Activated CD4-positive, alpha-beta T cell treated with anti-CD3 and anti-CD28 coated beads for 36 hours (primary cell): ENCODE measurements at regions of chr19 and their contacts with region 1.

Region 1: DNA sequence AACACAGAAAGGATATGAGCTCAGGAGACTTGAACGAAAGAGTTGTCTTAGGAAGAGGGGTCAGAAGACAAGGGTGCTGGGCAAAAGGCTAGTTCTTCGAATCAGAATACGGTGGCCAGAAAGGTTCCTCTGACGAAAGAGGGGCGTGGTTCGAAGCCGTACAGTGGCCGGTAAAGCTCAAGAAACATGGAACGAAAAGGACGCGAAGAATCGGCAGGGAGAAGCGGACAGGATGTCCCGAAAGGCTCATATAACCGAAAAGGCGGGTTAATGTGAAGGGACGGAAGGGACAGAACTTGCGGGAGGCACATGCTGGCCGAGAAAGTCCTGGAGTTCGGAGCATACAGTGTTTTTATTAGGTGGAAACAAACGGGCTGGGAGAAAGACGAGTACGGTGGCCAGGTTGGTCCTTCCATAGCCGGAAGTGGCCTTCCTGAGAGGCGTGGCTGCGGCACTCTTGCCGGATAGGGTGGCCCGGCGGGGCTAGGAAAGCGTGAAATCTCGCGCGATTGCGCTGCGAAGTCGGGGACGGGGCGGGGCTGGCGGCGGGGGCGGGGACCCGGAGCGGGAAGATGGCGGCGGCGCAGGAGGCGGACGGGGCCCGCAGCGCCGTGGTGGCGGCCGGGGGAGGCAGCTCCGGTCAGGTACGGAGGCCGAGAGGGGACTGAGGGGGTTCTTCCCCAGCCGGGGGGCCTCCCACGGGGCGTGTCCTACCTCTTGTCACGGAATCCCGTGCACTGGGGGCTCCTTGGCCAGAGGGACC is at the start of gene CLPTM1:
- DNase-seq: peak; percentile 99
- ATAC-seq: peak; percentile 94
- H3K4me3 Mint-ChIP-seq: peak within 1 kb of the TSS; percentile 95
- H3K27ac Mint-ChIP-seq: peak within 1 kb of the TSS; percentile 100
- H3K4me1 Mint-ChIP-seq: peaks cover 39% of the 10 kb centered on the region
- H3K27me3 Mint-ChIP-seq: no peaks in the 10 kb centered on the region
- total RNA-seq, gene CLPTM1: 41.6 to 44.1 TPM

Region 2: DNA sequence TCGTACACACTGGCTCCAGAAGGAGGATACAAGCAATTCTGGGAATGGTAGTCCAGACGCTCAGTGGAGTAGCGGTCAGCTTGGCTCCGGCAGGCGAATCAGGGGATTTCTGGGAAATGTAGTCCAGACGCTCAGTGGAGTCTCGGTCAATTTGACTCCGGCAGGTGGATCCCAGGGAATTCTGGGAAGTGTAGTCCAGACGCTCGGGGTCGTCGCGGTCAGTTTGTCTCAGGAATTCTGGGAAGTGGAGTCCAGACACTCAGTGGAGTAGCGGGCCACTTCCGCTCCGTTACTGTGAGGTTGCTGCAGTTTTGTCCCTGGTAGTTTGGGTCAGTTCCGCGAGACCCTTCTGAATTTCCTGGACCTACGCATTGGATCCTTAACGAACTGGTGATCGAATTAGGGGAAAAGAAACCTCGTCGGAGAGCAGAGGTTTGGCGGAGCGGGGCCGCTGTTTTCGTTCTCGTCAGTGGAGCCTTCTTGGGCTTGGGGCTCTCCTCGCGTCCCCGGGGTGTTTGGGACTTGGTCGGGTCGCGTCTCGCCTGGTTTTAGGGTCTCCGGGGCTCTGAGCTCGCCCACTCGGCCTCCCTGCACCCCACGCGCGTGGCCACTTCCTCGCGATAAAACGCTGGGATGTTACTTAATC is 841.7 kb before region 1 on chr19 and contains the start of gene ZNF225:
- CTCF ChIA-PET with region 1: no interaction called
- POLR2A ChIA-PET with region 1: no interaction called
- intact Hi-C with region 1: no loop called
- DNase-seq: peak; percentile 88
- ATAC-seq: peak; percentile 94
- H3K4me3 Mint-ChIP-seq: peak within 1 kb of the TSS; percentile 99
- H3K27ac Mint-ChIP-seq: peak within 1 kb of the TSS; percentile 93
- H3K4me1 Mint-ChIP-seq: peaks cover 19% of the 10 kb centered on the region
- H3K27me3 Mint-ChIP-seq: no peaks in the 10 kb centered on the region
- total RNA-seq, gene ZNF225: 2.6 to 3.1 TPM

Region 3: DNA sequence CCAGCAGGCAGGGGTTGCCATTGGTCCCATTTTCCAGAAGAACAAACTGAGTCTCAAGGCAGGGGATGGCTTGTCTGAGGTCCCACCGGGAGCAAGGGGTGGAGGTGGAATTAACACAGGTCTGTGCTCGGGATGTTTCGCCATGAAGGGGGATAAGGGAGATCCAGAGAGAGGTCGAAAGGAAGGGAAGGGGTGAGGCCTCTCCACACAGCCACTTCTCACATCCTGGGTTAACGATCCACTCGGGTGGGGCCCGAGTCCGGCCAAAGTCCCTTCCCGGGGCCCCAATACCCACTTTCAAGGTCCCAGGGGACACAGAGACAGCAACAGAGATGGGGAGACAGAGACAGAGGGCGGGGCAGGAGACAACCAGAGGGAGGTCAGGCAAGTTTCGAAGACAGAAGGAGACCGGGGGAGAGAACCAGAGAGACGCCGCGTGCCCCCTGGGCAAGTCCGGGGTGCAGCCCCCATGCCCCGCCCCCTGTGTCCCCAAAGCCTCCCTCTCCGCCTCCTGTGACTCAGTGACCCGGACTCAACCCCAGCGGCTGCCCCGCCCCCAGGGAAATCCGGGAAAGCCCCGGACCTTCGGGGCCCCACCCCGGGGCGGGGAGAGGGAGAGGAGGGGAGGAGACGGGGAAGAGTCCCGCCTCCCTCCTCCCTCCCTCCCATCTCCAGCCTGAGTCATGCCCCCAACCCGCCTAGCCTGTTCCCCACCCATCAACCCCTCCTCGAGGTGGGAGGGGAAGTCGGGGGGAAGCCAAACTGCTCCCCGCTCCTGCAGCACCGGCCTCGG is 207.9 kb before region 1 on chr19:
- CTCF ChIA-PET with region 1: no interaction called
- POLR2A ChIA-PET with region 1: interaction called, 5 read pairs
- intact Hi-C with region 1: loop called in 1 of 2 experiments (anchors 1 kb)
- DNase-seq: peak; percentile 98
- ATAC-seq: peak; percentile 85
- H3K4me3 Mint-ChIP-seq: peak overlapping the region; percentile 91
- H3K27ac Mint-ChIP-seq: peak overlapping the region; percentile 95
- H3K4me1 Mint-ChIP-seq: peaks cover 43% of the 10 kb centered on the region
- H3K27me3 Mint-ChIP-seq: no peaks in the 10 kb centered on the region

Region 4: GRCh38 chr19:44845612-44846454 is 109.2 kb before region 1 on chr19 and contains the start of gene NECTIN2:
- CTCF ChIA-PET with region 1: no interaction called
- POLR2A ChIA-PET with region 1: no interaction called
- intact Hi-C with region 1: loop called (anchors 1 to 2 kb)
- DNase-seq: peak; percentile 98
- ATAC-seq: peak; percentile 77
- H3K4me3 Mint-ChIP-seq: peak within 1 kb of the TSS; percentile 73
- H3K27ac Mint-ChIP-seq: peak within 1 kb of the TSS; percentile 10
- H3K4me1 Mint-ChIP-seq: peaks cover 21% of the 10 kb centered on the region
- H3K27me3 Mint-ChIP-seq: peaks cover 21% of the 10 kb centered on the region
- total RNA-seq, gene NECTIN2: 0.80 to 0.93 TPM

Region 5: DNA sequence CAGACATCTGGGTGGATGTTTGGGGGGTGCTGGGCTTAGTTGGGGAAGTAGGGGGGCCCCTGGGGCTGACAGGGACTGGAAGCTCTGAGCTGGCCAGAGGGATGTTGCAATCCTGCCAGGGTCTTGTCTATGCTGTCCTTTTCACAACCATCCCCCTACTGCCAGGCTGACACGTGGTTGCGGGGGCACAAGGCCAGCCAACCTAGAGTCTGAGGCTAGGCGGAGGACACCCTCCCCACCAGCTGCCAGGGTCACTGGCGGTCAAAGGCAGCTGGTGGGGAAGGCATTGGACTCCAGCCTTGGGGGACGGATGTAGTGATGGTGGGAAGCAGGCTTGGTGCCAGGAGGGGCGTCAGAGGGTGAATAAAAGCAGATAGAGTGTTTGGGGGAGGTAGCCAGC is 42.2 kb before region 1 on chr19:
- CTCF ChIA-PET with region 1: interaction called, 4 read pairs
- POLR2A ChIA-PET with region 1: interaction called, 3 read pairs
- intact Hi-C with region 1: loop called in 1 of 2 experiments (anchors 1 kb)
- DNase-seq: no peak
- ATAC-seq: no peak
- H3K4me3 Mint-ChIP-seq: no peak overlapping the region
- H3K27ac Mint-ChIP-seq: no peak overlapping the region
- H3K4me1 Mint-ChIP-seq: peaks cover 8% of the 10 kb centered on the region
- H3K27me3 Mint-ChIP-seq: peaks cover 27% of the 10 kb centered on the region

Region 6: DNA sequence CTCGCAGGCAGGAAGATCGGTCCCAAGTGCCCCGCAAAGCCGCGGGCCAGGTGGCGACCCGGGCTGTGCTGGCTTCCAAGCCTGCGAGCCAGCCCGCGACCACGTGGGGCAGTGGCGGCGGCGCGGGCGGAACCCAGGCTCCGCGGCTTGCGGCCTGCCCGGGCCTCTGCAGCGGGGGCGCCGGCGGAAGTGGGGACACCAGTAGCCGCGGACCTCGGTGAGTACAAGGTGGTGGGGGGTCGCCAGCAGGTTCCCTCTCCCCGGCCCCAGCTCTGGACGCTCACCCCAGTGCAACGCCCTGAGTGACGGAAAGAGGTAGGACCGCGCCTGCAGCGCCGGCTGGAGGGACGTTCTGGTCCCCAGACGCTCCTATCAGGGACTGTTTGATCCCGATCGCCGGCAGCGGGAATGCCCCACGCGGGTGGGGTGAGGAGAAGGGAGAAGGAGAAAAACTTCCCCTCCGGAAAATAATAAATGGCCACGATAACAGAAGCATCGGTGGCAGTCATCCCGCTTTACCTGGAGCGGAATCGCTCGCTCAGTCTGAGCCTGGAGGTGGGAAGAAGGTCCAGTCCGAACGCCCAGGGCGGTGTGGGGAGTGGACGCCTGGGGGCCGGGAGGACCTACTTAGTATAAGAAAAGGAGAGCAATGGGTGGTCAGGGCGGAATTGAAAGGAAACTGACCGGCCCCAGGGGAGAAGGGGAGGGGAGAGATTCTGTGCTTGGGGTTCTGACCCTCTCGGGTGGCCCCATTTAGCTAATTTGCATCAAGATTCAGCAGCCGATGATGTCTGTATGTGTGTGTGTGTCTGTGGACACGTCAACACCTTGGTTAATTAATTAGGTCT is 124.3 kb after region 1 on chr19 and contains the start of gene GEMIN7:
- CTCF ChIA-PET with region 1: no interaction called
- POLR2A ChIA-PET with region 1: no interaction called
- intact Hi-C with region 1: loop called in 1 of 2 experiments (anchors 1 kb)
- DNase-seq: peak; percentile 90
- ATAC-seq: peak; percentile 65
- H3K4me3 Mint-ChIP-seq: peak within 1 kb of the TSS; percentile 99
- H3K27ac Mint-ChIP-seq: peak within 1 kb of the TSS; percentile 88
- H3K4me1 Mint-ChIP-seq: peaks cover 43% of the 10 kb centered on the region
- H3K27me3 Mint-ChIP-seq: no peaks in the 10 kb centered on the region
- total RNA-seq, gene GEMIN7: 35.4 to 35.5 TPM

Region 7: GRCh38 chr19:45200568-45200994 is 245.6 kb after region 1 on chr19:
- CTCF ChIA-PET with region 1: no interaction called
- POLR2A ChIA-PET with region 1: no interaction called
- intact Hi-C with region 1: no loop called
- DNase-seq: no peak
- ATAC-seq: no peak
- H3K4me3 Mint-ChIP-seq: no peak overlapping the region
- H3K27ac Mint-ChIP-seq: no peak overlapping the region
- H3K4me1 Mint-ChIP-seq: no peaks in the 10 kb centered on the region
- H3K27me3 Mint-ChIP-seq: no peaks in the 10 kb centered on the region

Region 8: GRCh38 chr19:45276284-45276687 is 321.3 kb after region 1 on chr19:
- CTCF ChIA-PET with region 1: no interaction called
- POLR2A ChIA-PET with region 1: no interaction called
- intact Hi-C with region 1: no loop called
- DNase-seq: no peak
- ATAC-seq: no peak
- H3K4me3 Mint-ChIP-seq: no peak overlapping the region
- H3K27ac Mint-ChIP-seq: no peak overlapping the region
- H3K4me1 Mint-ChIP-seq: no peaks in the 10 kb centered on the region
- H3K27me3 Mint-ChIP-seq: no peaks in the 10 kb centered on the region

Region 9: GRCh38 chr19:45370410-45371204 is 415.6 kb after region 1 on chr19 and contains the start of gene ERCC2:
- CTCF ChIA-PET with region 1: no interaction called
- POLR2A ChIA-PET with region 1: no interaction called
- intact Hi-C with region 1: loop called in 1 of 2 experiments (anchors 1 kb)
- DNase-seq: peak; percentile 100
- ATAC-seq: peak; percentile 100
- H3K4me3 Mint-ChIP-seq: peak within 1 kb of the TSS; percentile 79
- H3K27ac Mint-ChIP-seq: peak within 1 kb of the TSS; percentile 97
- H3K4me1 Mint-ChIP-seq: peaks cover 8% of the 10 kb centered on the region
- H3K27me3 Mint-ChIP-seq: no peaks in the 10 kb centered on the region
- total RNA-seq, gene ERCC2: 27.5 to 30.4 TPM